ENCODE measurements at regions of chr1 and their contacts with region 1.

Region 1: GRCh38 chr1:87916965-87917364 is 588.3 kb downstream of the LMO4 start:
- DNase-seq: no peak
- ATAC-seq: no peak
- H3K4me3 Mint-ChIP-seq: no peak overlapping the region
- H3K27ac Mint-ChIP-seq: no peak overlapping the region
- H3K4me1 Mint-ChIP-seq: no peaks in the 10 kb centered on the region
- H3K27me3 Mint-ChIP-seq: no peaks in the 10 kb centered on the region
- CTCF ChIP-seq: no peak

Region 2: GRCh38 chr1:87894062-87894461 is 22.9 kb before region 1 on chr1:
- CTCF ChIA-PET with region 1: no interaction called
- POLR2A ChIA-PET with region 1: no interaction called
- intact Hi-C with region 1: loop called (anchors 2 kb)
- DNase-seq: no peak
- ATAC-seq: peak; percentile 74
- H3K4me3 Mint-ChIP-seq: peak overlapping the region; percentile 13
- H3K27ac Mint-ChIP-seq: peak overlapping the region; percentile 30
- H3K4me1 Mint-ChIP-seq: peaks cover 26% of the 10 kb centered on the region
- H3K27me3 Mint-ChIP-seq: no peaks in the 10 kb centered on the region
- CTCF ChIP-seq: no peak

Region 3: GRCh38 chr1:87902830-87903229 is 14.1 kb before region 1 on chr1:
- CTCF ChIA-PET with region 1: no interaction called
- POLR2A ChIA-PET with region 1: no interaction called
- intact Hi-C with region 1: loop called (anchors 1 kb)
- DNase-seq: no peak
- ATAC-seq: peak; percentile 14
- H3K4me3 Mint-ChIP-seq: peak overlapping the region; percentile 28
- H3K27ac Mint-ChIP-seq: peak overlapping the region; percentile 47
- H3K4me1 Mint-ChIP-seq: peaks cover 19% of the 10 kb centered on the region
- H3K27me3 Mint-ChIP-seq: no peaks in the 10 kb centered on the region
- CTCF ChIP-seq: no peak

Region 4: DNA sequence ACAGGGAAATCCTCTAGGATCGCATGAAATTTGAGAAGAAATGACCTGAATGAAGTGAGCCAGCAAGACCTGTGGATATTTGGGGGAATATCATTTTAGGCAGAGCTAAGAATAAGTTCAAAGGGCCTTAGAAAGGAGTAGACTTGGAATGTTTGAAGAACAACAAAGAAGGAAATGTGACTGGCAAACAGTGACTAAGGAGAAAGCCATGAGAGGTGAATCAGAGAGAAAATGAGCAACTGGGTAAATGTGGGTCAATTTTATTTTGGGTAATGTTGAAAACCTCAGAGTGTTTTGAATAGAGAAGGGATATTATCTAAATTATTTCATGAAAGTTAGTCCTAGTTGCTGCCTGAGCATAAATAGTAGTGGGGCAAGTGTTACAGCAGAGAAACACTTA is 84.5 kb after region 1 on chr1:
- CTCF ChIA-PET with region 1: no interaction called
- POLR2A ChIA-PET with region 1: no interaction called
- intact Hi-C with region 1: no loop called
- DNase-seq: no peak
- ATAC-seq: no peak
- H3K4me3 Mint-ChIP-seq: no peak overlapping the region
- H3K27ac Mint-ChIP-seq: no peak overlapping the region
- H3K4me1 Mint-ChIP-seq: no peaks in the 10 kb centered on the region
- H3K27me3 Mint-ChIP-seq: peaks cover 5% of the 10 kb centered on the region
- CTCF ChIP-seq: no peak

Measured in activated B cell treated with CpG ODN at 0.5 μM for 24 hours (primary cell).